ENCODE measurements at regions of chr12 and their contacts with region 1.

Region 1: GRCh38 chr12:53379389-53380103 is 430 bp upstream of the SP1 start:
- DNase-seq: peak; percentile 96
- ATAC-seq: peak; percentile 82
- H3K4me3 Mint-ChIP-seq: no peak overlapping the region
- H3K27ac Mint-ChIP-seq: no peak overlapping the region
- H3K4me1 Mint-ChIP-seq: peaks cover 39% of the 10 kb centered on the region
- H3K27me3 Mint-ChIP-seq: no peaks in the 10 kb centered on the region

Region 2: DNA sequence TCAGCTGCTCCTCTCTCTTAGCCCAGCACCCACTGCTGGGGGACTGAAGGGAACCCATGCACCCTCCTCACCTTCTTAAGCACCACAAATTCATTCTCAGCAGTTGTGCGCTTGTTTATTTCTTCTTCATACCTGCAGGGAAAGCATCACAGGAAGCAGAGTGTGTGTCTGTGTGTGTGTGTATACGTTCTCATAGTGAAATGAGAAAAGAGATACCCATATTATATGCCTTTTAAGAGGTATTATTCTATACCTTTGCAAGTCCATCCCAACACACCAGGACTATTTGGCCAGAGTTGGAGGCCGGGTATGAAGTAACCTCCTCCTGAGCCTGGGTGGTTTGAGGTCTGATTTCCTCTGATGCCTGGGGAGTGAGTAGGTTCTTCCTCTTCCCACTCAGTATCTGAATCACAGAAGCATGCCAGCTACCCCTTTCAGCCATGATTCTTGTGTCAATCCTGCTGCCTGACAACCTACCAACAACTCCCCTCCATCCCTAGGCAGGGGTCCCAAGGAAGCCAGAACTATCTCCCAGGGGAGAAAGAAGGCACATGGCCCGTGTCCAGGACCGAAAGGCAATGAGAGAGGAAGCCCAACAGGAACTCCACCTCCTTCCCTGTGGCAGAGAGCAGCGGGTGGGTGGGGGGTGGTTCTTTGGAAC is 764.2 kb before region 1 on chr12:
- CTCF ChIA-PET with region 1: no interaction called
- POLR2A ChIA-PET with region 1: no interaction called
- intact Hi-C with region 1: no loop called
- DNase-seq: peak; percentile 60
- ATAC-seq: peak; percentile 76
- H3K4me3 Mint-ChIP-seq: no peak overlapping the region
- H3K27ac Mint-ChIP-seq: peak overlapping the region; percentile 90
- H3K4me1 Mint-ChIP-seq: peaks cover 84% of the 10 kb centered on the region
- H3K27me3 Mint-ChIP-seq: no peaks in the 10 kb centered on the region

Region 3: GRCh38 chr12:52929538-52929937 is 450.0 kb before region 1 on chr12:
- CTCF ChIA-PET with region 1: no interaction called
- POLR2A ChIA-PET with region 1: no interaction called
- intact Hi-C with region 1: no loop called
- DNase-seq: no peak
- ATAC-seq: no peak
- H3K4me3 Mint-ChIP-seq: no peak overlapping the region
- H3K27ac Mint-ChIP-seq: no peak overlapping the region
- H3K4me1 Mint-ChIP-seq: no peaks in the 10 kb centered on the region
- H3K27me3 Mint-ChIP-seq: peaks cover 5% of the 10 kb centered on the region

Region 4: DNA sequence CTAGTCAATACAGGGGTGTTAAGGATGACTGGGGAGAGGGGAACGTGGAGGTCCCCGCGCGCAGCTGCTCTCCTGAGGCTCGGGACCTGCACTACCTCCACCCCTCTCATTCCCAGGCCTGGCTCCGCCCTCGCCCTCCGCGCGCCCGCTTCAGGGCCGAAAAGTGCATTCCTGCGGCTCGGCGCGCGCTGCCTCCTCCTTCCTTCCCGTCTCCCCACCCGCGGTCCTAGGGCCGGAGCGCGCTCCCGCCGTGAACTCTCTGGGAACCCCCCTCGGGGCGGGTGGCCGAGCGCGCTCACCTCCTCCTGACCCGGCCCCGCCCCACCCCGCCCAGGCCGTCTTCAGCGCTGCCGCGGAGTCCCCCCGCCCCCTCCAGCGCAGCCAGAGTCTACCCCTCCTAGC is 158.7 kb before region 1 on chr12:
- CTCF ChIA-PET with region 1: no interaction called
- POLR2A ChIA-PET with region 1: interaction called, 9 read pairs
- intact Hi-C with region 1: loop called in 1 of 2 experiments (anchors 1 kb)
- DNase-seq: peak; percentile 93
- ATAC-seq: peak; percentile 57
- H3K4me3 Mint-ChIP-seq: peak overlapping the region; percentile 83
- H3K27ac Mint-ChIP-seq: peak overlapping the region; percentile 87
- H3K4me1 Mint-ChIP-seq: peaks cover 78% of the 10 kb centered on the region
- H3K27me3 Mint-ChIP-seq: no peaks in the 10 kb centered on the region

Region 5: GRCh38 chr12:53295070-53295890 is 84.3 kb before region 1 on chr12 and contains the start of gene PFDN5:
- CTCF ChIA-PET with region 1: no interaction called
- POLR2A ChIA-PET with region 1: interaction called, 5 read pairs
- intact Hi-C with region 1: loop called in 1 of 2 experiments (anchors 1 kb)
- DNase-seq: peak; percentile 93
- ATAC-seq: peak; percentile 88
- H3K4me3 Mint-ChIP-seq: peak within 1 kb of the TSS; percentile 85
- H3K27ac Mint-ChIP-seq: peak within 1 kb of the TSS; percentile 94
- H3K4me1 Mint-ChIP-seq: peaks cover 52% of the 10 kb centered on the region
- H3K27me3 Mint-ChIP-seq: no peaks in the 10 kb centered on the region
- total RNA-seq, gene PFDN5: 253 to 322 TPM

Region 6: GRCh38 chr12:53365245-53365904 is 14.2 kb before region 1 on chr12:
- CTCF ChIA-PET with region 1: interaction called, 3 read pairs
- POLR2A ChIA-PET with region 1: interaction called, 12 read pairs
- intact Hi-C with region 1: no loop called
- DNase-seq: no peak
- ATAC-seq: peak; percentile 82
- H3K4me3 Mint-ChIP-seq: no peak overlapping the region
- H3K27ac Mint-ChIP-seq: peak overlapping the region; percentile 81
- H3K4me1 Mint-ChIP-seq: peaks cover 15% of the 10 kb centered on the region
- H3K27me3 Mint-ChIP-seq: no peaks in the 10 kb centered on the region

Region 7: DNA sequence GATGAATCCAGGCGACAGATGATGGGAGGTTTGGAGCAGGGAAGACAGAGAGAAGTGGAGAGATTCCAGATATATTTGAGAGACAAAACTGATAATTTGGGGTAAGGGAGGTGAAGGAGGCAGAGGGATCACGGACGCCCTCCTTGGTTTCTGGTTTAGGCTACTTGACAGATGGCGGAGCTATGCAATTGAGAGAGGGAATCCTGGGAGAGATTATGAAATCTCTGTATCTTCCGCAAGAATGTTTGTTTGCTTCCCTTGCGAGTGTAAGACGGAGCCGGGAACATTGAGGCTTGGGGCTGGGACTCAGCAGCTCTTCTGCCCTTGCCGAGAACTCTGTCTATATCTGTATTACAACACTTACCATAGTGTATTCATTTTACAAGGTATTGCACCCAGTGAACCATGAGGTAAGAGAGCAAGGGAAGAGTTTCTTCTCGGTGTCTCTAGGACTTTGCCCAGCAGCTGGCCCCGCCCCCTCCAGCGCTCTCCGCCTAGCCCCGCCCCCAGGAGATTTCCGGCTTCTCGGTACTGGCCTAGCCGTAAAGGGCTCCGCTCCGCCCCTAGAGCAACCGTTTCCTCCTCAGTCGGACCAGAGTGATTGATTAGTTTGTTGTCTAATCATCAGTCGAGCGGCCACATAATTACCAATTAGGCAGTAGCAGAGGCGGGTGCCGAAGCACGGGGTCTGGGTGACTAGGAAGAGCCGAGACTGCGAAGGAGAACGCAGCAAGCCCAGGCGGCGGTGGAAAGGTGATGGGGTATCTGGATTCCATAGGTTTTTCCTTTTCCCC is 61.7 kb after region 1 on chr12 and contains the start of gene PRR13:
- CTCF ChIA-PET with region 1: no interaction called
- POLR2A ChIA-PET with region 1: interaction called, 4 read pairs
- intact Hi-C with region 1: loop called (anchors 1 kb)
- DNase-seq: peak; percentile 100
- ATAC-seq: peak; percentile 99
- H3K4me3 Mint-ChIP-seq: peak within 1 kb of the TSS; percentile 92
- H3K27ac Mint-ChIP-seq: peak within 1 kb of the TSS; percentile 95
- H3K4me1 Mint-ChIP-seq: peaks cover 30% of the 10 kb centered on the region
- H3K27me3 Mint-ChIP-seq: no peaks in the 10 kb centered on the region
- total RNA-seq, gene PRR13: 250 to 266 TPM

Region 8: GRCh38 chr12:53500776-53501614 is 121.4 kb after region 1 on chr12 and contains the start of gene TARBP2:
- CTCF ChIA-PET with region 1: interaction called, 5 read pairs
- POLR2A ChIA-PET with region 1: interaction called, 15 read pairs
- intact Hi-C with region 1: loop called (anchors 1 to 2 kb)
- DNase-seq: peak; percentile 98
- ATAC-seq: peak; percentile 84
- H3K4me3 Mint-ChIP-seq: peak within 1 kb of the TSS; percentile 81
- H3K27ac Mint-ChIP-seq: peak within 1 kb of the TSS; percentile 98
- H3K4me1 Mint-ChIP-seq: peaks cover 31% of the 10 kb centered on the region
- H3K27me3 Mint-ChIP-seq: no peaks in the 10 kb centered on the region
- total RNA-seq, gene TARBP2: 28.3 to 30.2 TPM

Region 9: GRCh38 chr12:53727310-53728041 is 347.9 kb after region 1 on chr12 and contains the start of gene CALCOCO1:
- CTCF ChIA-PET with region 1: no interaction called
- POLR2A ChIA-PET with region 1: no interaction called
- intact Hi-C with region 1: loop called in 1 of 2 experiments (anchors 1 kb)
- DNase-seq: peak; percentile 99
- ATAC-seq: peak; percentile 99
- H3K4me3 Mint-ChIP-seq: peak within 1 kb of the TSS; percentile 80
- H3K27ac Mint-ChIP-seq: peak within 1 kb of the TSS; percentile 73
- H3K4me1 Mint-ChIP-seq: peaks cover 20% of the 10 kb centered on the region
- H3K27me3 Mint-ChIP-seq: no peaks in the 10 kb centered on the region
- total RNA-seq, gene CALCOCO1: 17.1 to 20.4 TPM

Measured in activated CD4-positive, alpha-beta T cell treated with anti-CD3 and anti-CD28 coated beads for 36 hours (primary cell).